H1 (cell line): ENCODE measurements at regions of chr5 and their contacts with region 1.

Region 1: GRCh38 chr5:59367791-59368394 is 525.6 kb downstream of the PDE4D start:
- DNase-seq: no peak
- H3K4me3 ChIP-seq: no peak overlapping the region
- H3K27ac ChIP-seq: no peak overlapping the region
- H3K4me1 ChIP-seq: peaks cover 0 to 3% (median 0%) of the 10 kb centered on the region in 4 experiments; a peak in 1 of 7 replicates
- H3K27me3 ChIP-seq: no peaks in the 10 kb centered on the region
- CTCF ChIP-seq: peak; percentile 55 to 83 (median 77)
- EP300 ChIP-seq: no peak
- POLR2A ChIP-seq: no peak
- RAD21 ChIP-seq: peak; percentile 78 to 79

Region 2: GRCh38 chr5:59188419-59189225 is 179.3 kb before region 1 on chr5:
- CTCF ChIA-PET with region 1: interaction called, 32 read pairs
- POLR2A ChIA-PET with region 1: no interaction called
- DNase-seq: peak in 1 of 2 experiments; percentile 25
- H3K4me3 ChIP-seq: peak overlapping the region in 1 of 4 experiments; percentile 26; a peak in 1 of 8 replicates
- H3K27ac ChIP-seq: no peak overlapping the region
- H3K4me1 ChIP-seq: peaks cover 0 to 5% (median 2%) of the 10 kb centered on the region in 4 experiments; a peak in 3 of 7 replicates
- H3K27me3 ChIP-seq: no peaks in the 10 kb centered on the region
- CTCF ChIP-seq: peak; percentile 46 to 82 (median 71)
- EP300 ChIP-seq: no peak
- POLR2A ChIP-seq: no peak
- RAD21 ChIP-seq: peak; percentile 93 to 94

Region 3: DNA sequence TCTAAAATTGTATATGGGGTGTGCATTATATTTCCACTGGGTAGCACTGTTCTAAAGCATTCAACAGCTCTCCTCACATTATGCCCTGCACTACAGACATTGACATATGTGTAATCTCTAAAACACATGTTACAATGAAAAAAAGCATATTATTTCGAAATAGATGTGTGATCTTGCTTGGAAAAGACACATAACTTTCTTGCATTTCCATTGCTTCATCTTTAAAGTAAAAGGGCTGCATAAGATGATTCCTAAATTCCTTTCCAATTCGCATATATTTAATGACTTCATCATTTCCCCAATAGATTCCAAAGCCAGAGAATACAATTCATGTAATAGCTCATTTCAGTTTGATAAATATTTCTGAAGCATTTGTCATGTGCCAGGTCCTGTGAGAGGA is 41.3 kb before region 1 on chr5:
- CTCF ChIA-PET with region 1: interaction called, 13 read pairs
- POLR2A ChIA-PET with region 1: no interaction called
- DNase-seq: no peak
- H3K4me3 ChIP-seq: no peak overlapping the region
- H3K27ac ChIP-seq: no peak overlapping the region
- H3K4me1 ChIP-seq: no peaks in the 10 kb centered on the region
- H3K27me3 ChIP-seq: no peaks in the 10 kb centered on the region
- CTCF ChIP-seq: no peak
- EP300 ChIP-seq: no peak
- POLR2A ChIP-seq: no peak
- RAD21 ChIP-seq: no peak

Region 4: DNA sequence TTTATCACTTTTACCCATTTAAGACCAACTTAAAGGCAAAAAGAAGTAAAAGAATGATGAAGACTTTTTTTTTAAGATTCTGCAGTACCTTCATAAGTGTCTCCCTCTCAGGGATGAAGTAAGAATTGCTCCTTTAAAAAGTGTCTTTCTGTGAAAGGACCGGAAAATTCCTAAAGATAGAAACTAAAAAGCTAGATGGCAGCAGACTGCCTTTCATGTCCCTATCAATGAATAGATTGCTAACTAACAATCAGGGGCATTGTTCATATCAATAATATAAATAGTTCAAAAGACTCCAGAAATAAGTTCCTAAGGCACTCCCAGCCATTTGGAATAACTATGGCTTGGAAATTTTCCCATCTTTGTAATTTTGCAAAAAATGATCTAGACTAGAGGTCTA is 32.3 kb before region 1 on chr5:
- CTCF ChIA-PET with region 1: interaction called, 14 read pairs
- POLR2A ChIA-PET with region 1: no interaction called
- DNase-seq: no peak
- H3K4me3 ChIP-seq: no peak overlapping the region
- H3K27ac ChIP-seq: no peak overlapping the region
- H3K4me1 ChIP-seq: no peaks in the 10 kb centered on the region
- H3K27me3 ChIP-seq: no peaks in the 10 kb centered on the region
- CTCF ChIP-seq: peak in 2 of 3 experiments; percentile 33 to 39; a peak in 2 of 4 replicates
- EP300 ChIP-seq: no peak
- POLR2A ChIP-seq: no peak
- RAD21 ChIP-seq: peak; percentile 27 to 32; a peak in 3 of 4 replicates

Region 5: DNA sequence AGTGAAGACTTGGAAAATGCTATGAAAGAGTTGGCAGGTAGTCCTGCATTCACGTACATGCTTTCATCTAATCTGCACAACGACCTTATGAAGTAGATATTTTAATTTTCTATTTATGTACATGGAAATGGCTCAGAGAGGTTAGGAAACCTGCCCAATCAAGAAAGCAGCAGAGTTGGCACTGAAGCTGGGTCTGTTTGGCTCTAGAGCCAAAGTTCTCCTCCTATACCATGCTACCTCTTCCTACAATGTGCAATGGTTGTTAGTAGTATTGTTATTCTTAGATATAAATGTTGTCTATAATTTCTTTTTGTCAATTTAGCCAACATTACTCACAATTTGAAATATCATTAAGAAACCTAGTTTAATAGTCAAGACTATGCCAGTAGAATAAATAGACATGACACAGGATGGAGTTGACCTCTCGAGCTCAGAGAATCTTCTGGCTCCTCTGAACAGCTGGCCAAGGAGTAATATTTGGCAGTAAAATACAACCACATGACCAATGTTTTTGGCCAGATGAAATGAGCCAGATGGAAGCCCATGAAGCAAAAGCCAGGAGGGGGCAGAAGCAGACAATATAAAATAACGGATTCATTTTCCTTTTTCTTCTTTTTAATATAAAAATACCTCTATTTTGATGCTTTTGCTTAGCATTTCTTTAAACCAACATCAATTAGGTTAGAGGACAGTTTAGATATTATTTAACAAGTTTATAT is 16.7 kb before region 1 on chr5:
- CTCF ChIA-PET with region 1: interaction called, 45 read pairs
- POLR2A ChIA-PET with region 1: no interaction called
- DNase-seq: no peak
- H3K4me3 ChIP-seq: no peak overlapping the region
- H3K27ac ChIP-seq: no peak overlapping the region
- H3K4me1 ChIP-seq: no peaks in the 10 kb centered on the region; a peak in 1 of 7 replicates
- H3K27me3 ChIP-seq: no peaks in the 10 kb centered on the region
- CTCF ChIP-seq: no peak
- EP300 ChIP-seq: no peak
- POLR2A ChIP-seq: no peak
- RAD21 ChIP-seq: no peak

Region 6: GRCh38 chr5:59380350-59380951 is 12.6 kb after region 1 on chr5:
- CTCF ChIA-PET with region 1: interaction called, 33 read pairs
- POLR2A ChIA-PET with region 1: no interaction called
- DNase-seq: no peak
- H3K4me3 ChIP-seq: no peak overlapping the region
- H3K27ac ChIP-seq: no peak overlapping the region
- H3K4me1 ChIP-seq: no peaks in the 10 kb centered on the region
- H3K27me3 ChIP-seq: no peaks in the 10 kb centered on the region
- CTCF ChIP-seq: peak in 1 of 3 experiments; percentile 20; a peak in 1 of 4 replicates
- EP300 ChIP-seq: no peak
- POLR2A ChIP-seq: no peak
- RAD21 ChIP-seq: peak; percentile 49

Region 7: DNA sequence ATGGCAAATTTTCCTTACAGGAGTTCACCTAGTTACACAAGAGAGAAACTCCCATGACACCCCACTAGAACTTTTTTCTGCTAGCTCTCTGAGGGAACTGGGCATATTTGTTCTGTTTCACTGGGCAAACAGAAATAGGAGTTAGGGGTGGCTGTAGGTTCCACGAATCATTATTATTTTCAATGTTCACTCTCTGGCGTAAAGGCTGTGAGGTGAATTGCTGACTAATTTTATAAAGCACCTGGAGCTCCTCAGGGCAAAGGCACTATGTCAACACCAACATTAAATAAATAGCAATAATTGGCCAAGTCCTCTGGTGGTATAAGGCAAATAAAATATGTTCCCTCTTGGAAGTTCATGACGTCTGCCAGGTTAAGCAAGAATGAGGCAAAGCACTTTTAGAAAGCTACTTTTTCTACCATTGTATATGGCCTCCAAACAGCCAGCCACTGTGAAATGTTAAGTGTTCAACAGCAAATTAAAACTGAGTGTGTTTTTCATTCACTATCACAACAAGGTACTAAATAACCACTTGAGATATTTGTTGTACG is 181.0 kb after region 1 on chr5:
- CTCF ChIA-PET with region 1: no interaction called
- POLR2A ChIA-PET with region 1: no interaction called
- DNase-seq: no peak
- H3K4me3 ChIP-seq: no peak overlapping the region
- H3K27ac ChIP-seq: no peak overlapping the region
- H3K4me1 ChIP-seq: peaks cover 0 to 4% (median 0%) of the 10 kb centered on the region in 4 experiments; a peak in 2 of 7 replicates
- H3K27me3 ChIP-seq: no peaks in the 10 kb centered on the region
- CTCF ChIP-seq: no peak
- EP300 ChIP-seq: no peak
- POLR2A ChIP-seq: no peak
- RAD21 ChIP-seq: no peak